ENCODE measurements at regions of chr1 and their contacts with region 1.

Region 1: GRCh38 chr1:54791880-54792522 is 9.1 kb downstream of the TTC22 start:
- DNase-seq: peak; percentile 88
- ATAC-seq: peak; percentile 47
- H3K4me3 Mint-ChIP-seq: no peak overlapping the region
- H3K27ac Mint-ChIP-seq: no peak overlapping the region
- H3K4me1 Mint-ChIP-seq: peaks cover 38% of the 10 kb centered on the region
- H3K27me3 Mint-ChIP-seq: peaks cover 3% of the 10 kb centered on the region; the same call in 1 of the 2 replicates
- CTCF ChIP-seq: peak; percentile 91

Region 2: DNA sequence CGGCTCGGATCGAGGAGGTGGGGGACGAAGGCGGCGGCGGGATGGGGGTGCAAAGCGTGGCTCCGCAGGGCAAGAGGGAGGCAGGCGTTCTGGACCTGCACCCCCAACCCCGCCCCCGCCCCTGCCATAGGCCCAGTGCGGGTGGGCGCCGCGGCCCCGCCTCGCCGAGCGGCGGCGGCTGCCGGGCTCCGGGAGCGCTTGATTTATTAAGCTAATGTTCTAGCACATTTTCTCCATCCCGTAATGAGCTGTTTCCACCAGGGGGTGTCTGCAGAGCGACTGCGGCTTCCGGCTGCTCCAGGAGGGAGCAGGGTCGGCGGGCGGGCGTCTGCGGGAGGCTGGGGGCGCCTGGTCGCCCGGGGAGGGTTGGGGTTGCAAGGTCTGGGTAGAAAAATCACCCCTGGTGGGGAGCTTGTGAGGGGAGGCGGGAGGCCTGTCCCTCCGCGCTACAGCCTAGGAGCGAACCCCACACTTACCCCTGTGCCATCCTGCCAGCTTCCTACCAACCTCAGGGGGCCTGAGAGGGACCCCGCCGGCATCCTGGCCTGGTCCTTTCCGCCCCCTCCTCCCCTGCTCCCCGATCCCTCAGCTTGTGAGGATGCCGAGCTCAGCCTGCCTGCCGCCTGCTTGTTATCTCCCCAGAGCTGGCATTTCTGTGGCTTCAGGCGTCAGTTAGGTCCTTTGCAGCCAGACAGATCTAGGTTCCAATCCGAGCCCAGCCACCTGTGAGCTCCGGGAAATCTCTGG is 292.5 kb before region 1 on chr1:
- CTCF ChIA-PET with region 1: interaction called, 10 read pairs
- POLR2A ChIA-PET with region 1: no interaction called
- DNase-seq: peak; percentile 59
- ATAC-seq: peak; percentile 63
- H3K4me3 Mint-ChIP-seq: peak overlapping the region; percentile 71
- H3K27ac Mint-ChIP-seq: no peak overlapping the region
- H3K4me1 Mint-ChIP-seq: peaks cover 37% of the 10 kb centered on the region
- H3K27me3 Mint-ChIP-seq: no peaks in the 10 kb centered on the region; the same call in 1 of the 2 replicates
- CTCF ChIP-seq: no peak

Region 3: DNA sequence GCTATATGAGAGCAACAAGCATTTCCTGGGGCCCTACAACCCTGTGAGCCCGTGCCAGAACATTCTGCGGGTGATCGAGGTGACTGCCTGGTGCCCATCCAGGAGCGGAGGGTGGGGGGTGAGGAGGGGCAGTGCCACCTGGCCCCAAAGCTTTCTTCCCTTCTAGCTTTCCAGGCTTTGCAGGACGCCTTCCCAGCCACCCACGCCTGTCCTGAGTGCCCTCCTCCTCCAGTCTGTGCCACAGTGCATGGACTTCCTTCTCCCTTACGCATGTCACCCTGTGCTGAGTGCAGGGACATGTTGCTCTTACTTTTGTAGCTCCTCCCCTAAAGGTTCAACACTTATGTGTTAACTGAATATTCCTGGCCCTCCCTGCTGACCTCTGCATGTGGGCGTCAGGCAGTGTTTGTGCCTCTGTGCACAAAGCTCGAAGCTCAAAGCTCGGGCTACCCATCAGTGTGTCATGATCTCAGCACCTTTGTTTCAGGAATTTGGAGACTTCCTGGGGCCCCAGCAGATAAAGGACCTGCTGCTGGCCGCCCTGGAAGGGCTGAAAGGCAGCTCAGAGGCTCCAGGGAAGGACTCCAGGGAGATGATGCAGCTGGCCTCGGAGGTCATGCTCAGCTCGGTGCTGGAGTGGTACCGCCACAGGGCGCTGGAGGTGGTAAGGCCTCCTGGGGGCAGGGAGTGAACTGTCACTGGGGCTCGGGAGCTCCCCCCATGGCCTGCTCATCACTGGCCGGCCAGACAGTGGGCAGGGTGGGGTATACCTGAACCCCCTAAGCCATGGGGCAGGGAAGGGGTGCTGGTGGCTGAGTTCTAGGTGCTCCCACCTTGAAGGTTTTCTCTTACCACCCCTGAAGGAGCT is 113.0 kb before region 1 on chr1:
- CTCF ChIA-PET with region 1: interaction called, 10 read pairs
- POLR2A ChIA-PET with region 1: no interaction called
- DNase-seq: no peak
- ATAC-seq: no peak; the same call in 1 of the 2 replicates
- H3K4me3 Mint-ChIP-seq: no peak overlapping the region
- H3K27ac Mint-ChIP-seq: peak overlapping the region; percentile 18; the same call in 1 of the 2 replicates
- H3K4me1 Mint-ChIP-seq: peaks cover 10% of the 10 kb centered on the region
- H3K27me3 Mint-ChIP-seq: peaks cover 3% of the 10 kb centered on the region; the same call in 1 of the 2 replicates
- CTCF ChIP-seq: no peak

Region 4: GRCh38 chr1:54750596-54750995 is 41.4 kb before region 1 on chr1:
- CTCF ChIA-PET with region 1: interaction called, 19 read pairs
- POLR2A ChIA-PET with region 1: no interaction called
- DNase-seq: no peak
- ATAC-seq: no peak
- H3K4me3 Mint-ChIP-seq: no peak overlapping the region
- H3K27ac Mint-ChIP-seq: no peak overlapping the region
- H3K4me1 Mint-ChIP-seq: peaks cover 18% of the 10 kb centered on the region
- H3K27me3 Mint-ChIP-seq: no peaks in the 10 kb centered on the region; the same call in 1 of the 2 replicates
- CTCF ChIP-seq: no peak

Region 5: DNA sequence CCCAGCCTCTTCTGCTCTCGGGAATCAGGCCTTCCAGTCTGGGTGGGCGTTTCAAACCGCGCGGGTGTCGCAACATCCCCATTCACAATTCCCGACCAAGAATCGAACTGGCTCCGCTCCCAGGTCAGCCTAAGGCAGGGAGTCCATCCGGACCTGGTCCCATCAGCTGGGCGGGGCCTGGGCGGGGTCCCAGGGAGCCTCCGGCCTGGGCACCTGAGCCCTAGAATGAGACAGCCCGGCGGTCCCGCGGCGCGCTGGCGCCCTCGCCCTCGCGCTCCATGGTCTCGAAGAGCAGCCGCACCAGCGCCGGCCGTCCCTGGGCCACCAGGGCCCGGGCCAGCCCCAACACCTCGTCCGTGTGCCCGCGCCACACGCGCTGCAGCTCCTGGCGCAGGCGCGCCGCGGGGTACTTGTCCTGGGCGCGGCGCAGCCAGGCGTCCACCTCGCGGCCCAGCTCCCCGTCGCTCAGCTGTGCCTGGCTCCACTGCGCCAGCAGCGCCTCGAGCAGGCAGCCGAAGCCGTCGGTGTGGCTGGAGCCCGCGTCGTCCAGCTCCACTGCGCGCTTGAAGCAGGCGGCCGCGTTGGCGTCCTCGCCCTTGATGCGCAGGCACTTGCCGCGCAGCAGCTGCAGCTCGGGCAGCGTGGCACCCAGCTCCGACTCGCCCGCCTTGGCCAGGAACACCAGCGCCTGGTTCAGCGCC is 10.8 kb before region 1 on chr1:
- CTCF ChIA-PET with region 1: interaction called, 26 read pairs
- POLR2A ChIA-PET with region 1: no interaction called
- DNase-seq: peak; percentile 64
- ATAC-seq: peak; percentile 82
- H3K4me3 Mint-ChIP-seq: peak overlapping the region; percentile 52
- H3K27ac Mint-ChIP-seq: no peak overlapping the region
- H3K4me1 Mint-ChIP-seq: peaks cover 5% of the 10 kb centered on the region; the same call in 1 of the 2 replicates
- H3K27me3 Mint-ChIP-seq: peaks cover 54% of the 10 kb centered on the region
- CTCF ChIP-seq: no peak

Region 6: DNA sequence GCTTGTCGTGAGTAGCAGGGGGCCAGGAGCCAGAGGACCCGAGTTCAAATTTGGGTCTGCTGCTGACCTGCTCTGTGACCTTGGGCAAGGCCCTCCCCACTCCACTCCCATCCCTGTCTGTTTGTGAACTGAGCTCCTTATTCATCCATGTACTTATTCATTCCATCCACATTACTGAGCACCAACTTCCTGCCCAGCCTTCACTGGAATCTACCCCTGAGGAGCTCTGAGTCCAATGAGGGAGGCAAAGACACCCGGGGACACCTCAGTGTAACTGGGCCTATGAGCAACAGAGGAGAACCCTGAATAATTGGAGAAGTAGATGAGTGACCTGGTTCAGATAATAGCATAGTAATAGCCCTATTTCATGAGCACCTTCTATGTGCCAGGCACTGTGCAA is 215.6 kb after region 1 on chr1:
- CTCF ChIA-PET with region 1: no interaction called
- POLR2A ChIA-PET with region 1: no interaction called
- DNase-seq: no peak
- ATAC-seq: no peak
- H3K4me3 Mint-ChIP-seq: no peak overlapping the region
- H3K27ac Mint-ChIP-seq: no peak overlapping the region
- H3K4me1 Mint-ChIP-seq: peaks cover 18% of the 10 kb centered on the region
- H3K27me3 Mint-ChIP-seq: peaks cover 19% of the 10 kb centered on the region
- CTCF ChIP-seq: no peak

Measured in WTC11 (cell line).